ENCODE measurements at regions of chr7 and their contacts with region 1.

Region 1: GRCh38 chr7:19665399-19666008 is 43.3 kb downstream of the POLR1F start:
- DNase-seq: no peak
- ATAC-seq: no peak
- H3K4me3 ChIP-seq: no peak overlapping the region
- H3K27ac ChIP-seq: no peak overlapping the region
- H3K4me1 ChIP-seq: no peaks in the 10 kb centered on the region
- H3K27me3 ChIP-seq: peaks cover 0 to 2% (median 0%) of the 10 kb centered on the region in 9 donors
- CTCF ChIP-seq: peak; percentile 35 to 70 (median 58)
- POLR2A ChIP-seq: no peak

Region 2: GRCh38 chr7:17680943-17681351 is 1984.6 kb before region 1 on chr7:
- intact Hi-C with region 1: loop called in 2 of 10 experiments (anchors 10 kb)
- DNase-seq: no peak
- ATAC-seq: peak in 1 of 4 donors; percentile 20
- H3K4me3 ChIP-seq: no peak overlapping the region
- H3K27ac ChIP-seq: peak overlapping the region in 1 of 12 donors; percentile 75
- H3K4me1 ChIP-seq: peaks cover 0 to 45% (median 16%) of the 10 kb centered on the region in 12 donors
- H3K27me3 ChIP-seq: no peaks in the 10 kb centered on the region
- CTCF ChIP-seq: peak; percentile 33 to 72 (median 62)
- POLR2A ChIP-seq: no peak

Region 3: DNA sequence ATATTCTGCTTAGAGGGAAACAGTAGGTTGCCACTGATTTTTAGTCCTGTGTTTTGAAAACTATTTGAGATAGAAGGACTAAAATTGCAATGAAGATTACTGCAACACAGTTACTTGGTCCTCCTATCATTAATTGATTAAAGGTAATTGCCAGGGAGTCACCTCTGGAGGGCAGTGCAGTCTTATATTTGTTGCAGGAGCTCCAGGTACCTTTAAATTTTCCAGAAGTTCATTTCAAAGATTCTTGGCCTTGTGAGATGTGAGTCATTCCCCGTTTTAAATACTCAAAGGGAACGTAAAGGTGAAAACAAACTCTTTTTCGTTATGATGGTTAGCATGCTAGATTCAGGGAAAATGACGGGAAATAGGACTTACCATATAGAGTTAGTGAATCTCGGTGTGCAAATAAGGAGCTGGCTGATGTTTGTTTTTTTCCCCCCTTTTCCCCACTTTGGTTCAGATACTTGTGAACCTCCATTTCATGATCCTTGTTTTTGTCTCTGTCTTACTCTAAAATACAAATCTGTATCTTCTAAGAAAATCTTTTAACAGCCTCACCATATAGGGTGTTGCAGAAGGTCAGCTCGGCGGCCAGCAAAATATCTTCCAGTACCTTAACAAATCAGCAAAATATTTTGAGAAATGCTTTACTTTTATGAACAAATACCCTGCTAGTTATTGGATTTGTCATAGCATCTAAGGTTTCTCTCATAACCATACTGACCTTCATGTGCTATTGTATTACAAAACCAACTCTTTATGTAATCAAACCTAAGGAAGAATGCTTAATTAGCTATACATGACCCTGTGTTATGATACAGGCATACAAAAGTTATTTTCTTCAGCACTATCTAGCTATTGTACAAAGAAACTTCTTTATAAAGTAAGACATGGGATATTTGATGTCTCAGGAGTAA is 1312.9 kb before region 1 on chr7:
- intact Hi-C with region 1: loop called in 4 of 10 experiments (anchors 5 to 10 kb)
- DNase-seq: peak in 4 of 5 donors; percentile 26 to 30 (median 29)
- ATAC-seq: peak in 3 of 4 donors; percentile 63 to 77 (median 71)
- H3K4me3 ChIP-seq: no peak overlapping the region
- H3K27ac ChIP-seq: no peak overlapping the region
- H3K4me1 ChIP-seq: peaks cover 0 to 12% (median 5%) of the 10 kb centered on the region in 12 donors
- H3K27me3 ChIP-seq: no peaks in the 10 kb centered on the region
- CTCF ChIP-seq: peak; percentile 33 to 77 (median 62)
- POLR2A ChIP-seq: no peak

Region 4: GRCh38 chr7:18590744-18591340 is 1074.7 kb before region 1 on chr7:
- intact Hi-C with region 1: loop called in 1 of 10 experiments (anchors 10 kb)
- DNase-seq: no peak
- ATAC-seq: peak in 2 of 4 donors; percentile 48 to 50
- H3K4me3 ChIP-seq: no peak overlapping the region
- H3K27ac ChIP-seq: no peak overlapping the region
- H3K4me1 ChIP-seq: peaks cover 0 to 6% (median 0%) of the 10 kb centered on the region in 12 donors
- H3K27me3 ChIP-seq: no peaks in the 10 kb centered on the region
- CTCF ChIP-seq: peak; percentile 33 to 69 (median 54)
- POLR2A ChIP-seq: no peak

Region 5: DNA sequence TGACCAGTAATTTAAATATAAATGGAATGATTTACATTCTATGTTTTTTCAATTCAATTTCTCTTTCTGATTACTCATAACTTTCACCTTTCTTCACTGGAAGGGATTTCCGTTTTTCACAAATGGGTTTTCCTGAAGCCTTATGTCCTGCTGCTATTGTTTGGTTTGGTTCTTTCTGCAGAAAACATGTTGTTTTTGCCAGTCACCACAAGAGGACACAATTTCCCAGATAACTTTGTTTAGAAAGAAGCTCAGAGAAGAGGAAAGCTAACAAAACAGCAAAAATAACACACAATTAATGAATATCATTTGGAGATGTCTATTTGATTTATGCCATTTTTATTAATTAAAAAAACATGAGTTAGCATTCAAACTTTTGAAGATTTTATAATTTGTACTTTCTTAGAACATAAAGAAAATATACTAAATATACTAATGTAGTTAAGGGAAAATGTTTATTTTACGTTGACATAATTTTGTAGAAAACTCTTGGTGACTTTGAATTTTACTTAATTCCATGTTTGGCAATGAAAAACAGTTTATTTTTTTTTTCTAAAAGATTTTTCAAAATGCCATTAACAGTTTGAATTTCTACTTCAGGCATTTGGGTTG is 543.4 kb before region 1 on chr7:
- intact Hi-C with region 1: loop called in 1 of 10 experiments (anchors 10 kb)
- DNase-seq: no peak
- ATAC-seq: no peak
- H3K4me3 ChIP-seq: no peak overlapping the region
- H3K27ac ChIP-seq: no peak overlapping the region
- H3K4me1 ChIP-seq: peaks cover 0 to 21% (median 0%) of the 10 kb centered on the region in 12 donors
- H3K27me3 ChIP-seq: peaks cover 8 to 90% (median 52%) of the 10 kb centered on the region in 9 donors
- CTCF ChIP-seq: peak in 11 of 12 donors; percentile 19 to 57 (median 40)
- POLR2A ChIP-seq: no peak

Measured in heart left ventricle (tissue), 16 donors.